ENCODE measurements at regions of chr6 and their contacts with region 1.

Region 1: DNA sequence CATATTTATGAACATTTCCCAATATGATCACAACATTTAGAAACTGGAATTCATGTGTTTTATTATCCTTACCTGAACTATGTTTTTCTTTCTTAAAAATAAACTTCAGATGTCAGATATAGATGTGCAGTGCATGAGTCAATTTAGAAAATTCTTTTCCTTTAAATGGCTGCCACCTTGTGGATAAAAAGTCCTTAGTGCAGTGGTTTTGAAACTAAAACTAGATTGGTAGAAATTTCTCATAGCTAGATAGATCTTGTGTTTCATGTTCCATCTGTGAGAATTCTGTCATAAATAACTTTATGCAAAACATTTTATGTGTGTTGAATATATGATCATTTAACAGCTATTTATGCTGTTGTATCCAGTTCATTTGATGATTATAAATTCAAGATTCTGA is 134.9 kb downstream of the KLHL32 start:
- DNase-seq: no peak
- H3K4me3 Mint-ChIP-seq: no peak overlapping the region
- H3K27ac Mint-ChIP-seq: no peak overlapping the region
- H3K4me1 Mint-ChIP-seq: peaks cover 2% of the 10 kb centered on the region
- H3K27me3 Mint-ChIP-seq: no peaks in the 10 kb centered on the region

Region 2: DNA sequence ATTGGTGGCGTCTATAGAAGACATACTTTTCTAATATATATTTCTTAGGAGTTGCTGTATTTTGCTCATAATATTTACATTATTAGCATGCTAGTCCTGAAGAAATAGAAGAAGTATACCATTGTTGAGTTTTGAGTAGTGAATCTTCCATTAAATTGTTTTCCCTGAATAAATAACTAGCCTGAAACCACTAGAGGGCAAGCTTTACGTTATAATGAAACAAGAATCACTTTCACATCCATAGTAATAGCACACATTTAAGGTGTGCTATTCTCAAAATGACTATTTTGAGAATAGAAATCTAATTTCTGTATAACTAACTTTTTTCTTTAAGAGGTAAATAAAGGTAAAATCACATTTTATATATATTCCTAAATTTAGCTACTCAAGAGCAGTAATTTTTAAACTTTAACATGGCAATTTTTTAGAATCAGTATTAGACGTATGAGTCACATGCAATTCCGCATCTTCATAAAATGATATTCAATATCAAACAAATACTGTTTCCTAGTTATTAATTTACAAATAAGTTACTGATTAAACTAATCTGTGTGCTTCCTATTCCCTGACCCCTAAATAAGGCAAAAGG is 1695.4 kb before region 1 on chr6:
- CTCF ChIA-PET with region 1: no interaction called
- intact Hi-C with region 1: loop called (anchors 10 kb)
- DNase-seq: no peak
- H3K4me3 Mint-ChIP-seq: no peak overlapping the region
- H3K27ac Mint-ChIP-seq: no peak overlapping the region
- H3K4me1 Mint-ChIP-seq: no peaks in the 10 kb centered on the region
- H3K27me3 Mint-ChIP-seq: no peaks in the 10 kb centered on the region

Region 3: GRCh38 chr6:96542702-96543101 is 516.8 kb before region 1 on chr6:
- CTCF ChIA-PET with region 1: no interaction called
- intact Hi-C with region 1: loop called (anchors 1 kb)
- DNase-seq: peak; percentile 6
- H3K4me3 Mint-ChIP-seq: no peak overlapping the region
- H3K27ac Mint-ChIP-seq: no peak overlapping the region
- H3K4me1 Mint-ChIP-seq: no peaks in the 10 kb centered on the region
- H3K27me3 Mint-ChIP-seq: no peaks in the 10 kb centered on the region

Region 4: DNA sequence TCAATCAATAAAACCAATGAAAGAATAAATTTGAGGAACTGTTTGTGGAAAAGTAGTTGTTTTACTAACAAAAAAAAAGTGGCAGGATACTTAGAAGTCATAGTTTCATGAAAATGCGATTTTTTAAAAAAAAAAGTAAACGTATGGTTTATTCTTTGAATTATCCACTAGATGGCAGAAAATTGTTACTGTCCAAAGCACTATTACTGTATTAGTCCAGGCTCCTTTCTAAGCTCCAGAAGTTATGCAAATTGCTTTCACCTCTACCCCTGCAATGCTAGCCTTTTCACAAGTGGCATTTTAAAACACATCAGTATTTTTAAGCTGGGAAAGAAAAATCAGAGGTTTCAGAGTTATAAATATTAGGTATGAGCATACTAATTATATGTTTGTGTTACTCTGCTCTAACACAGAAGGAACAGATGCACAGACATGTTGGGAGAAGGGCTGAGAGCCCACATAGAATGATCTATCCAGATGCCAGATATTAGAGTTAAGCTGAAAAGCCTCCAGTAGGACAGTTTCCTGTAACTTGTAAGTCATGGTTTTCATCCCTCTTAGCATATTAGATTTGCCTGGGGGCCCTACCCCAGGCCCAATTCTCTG is 432.6 kb before region 1 on chr6:
- CTCF ChIA-PET with region 1: interaction called, 14 read pairs
- intact Hi-C with region 1: loop called (anchors 1 kb)
- DNase-seq: no peak
- H3K4me3 Mint-ChIP-seq: no peak overlapping the region
- H3K27ac Mint-ChIP-seq: no peak overlapping the region
- H3K4me1 Mint-ChIP-seq: no peaks in the 10 kb centered on the region
- H3K27me3 Mint-ChIP-seq: peaks cover 4% of the 10 kb centered on the region

Region 5: GRCh38 chr6:96704713-96705112 is 354.8 kb before region 1 on chr6:
- CTCF ChIA-PET with region 1: no interaction called
- intact Hi-C with region 1: loop called (anchors 10 kb)
- DNase-seq: no peak
- H3K4me3 Mint-ChIP-seq: no peak overlapping the region
- H3K27ac Mint-ChIP-seq: no peak overlapping the region
- H3K4me1 Mint-ChIP-seq: no peaks in the 10 kb centered on the region
- H3K27me3 Mint-ChIP-seq: peaks cover 5% of the 10 kb centered on the region

Region 6: GRCh38 chr6:96837081-96837971 is 222.1 kb before region 1 on chr6 and contains the start of gene GPR63:
- CTCF ChIA-PET with region 1: interaction called, 5 read pairs
- intact Hi-C with region 1: loop called (anchors 2 kb)
- DNase-seq: peak; percentile 75
- H3K4me3 Mint-ChIP-seq: peak within 1 kb of the TSS; percentile 82
- H3K27ac Mint-ChIP-seq: no peak within 1 kb of the TSS
- H3K4me1 Mint-ChIP-seq: peaks cover 10% of the 10 kb centered on the region
- H3K27me3 Mint-ChIP-seq: peaks cover 54% of the 10 kb centered on the region
- total RNA-seq, gene GPR63: 0.72 to 0.81 TPM

Region 7: DNA sequence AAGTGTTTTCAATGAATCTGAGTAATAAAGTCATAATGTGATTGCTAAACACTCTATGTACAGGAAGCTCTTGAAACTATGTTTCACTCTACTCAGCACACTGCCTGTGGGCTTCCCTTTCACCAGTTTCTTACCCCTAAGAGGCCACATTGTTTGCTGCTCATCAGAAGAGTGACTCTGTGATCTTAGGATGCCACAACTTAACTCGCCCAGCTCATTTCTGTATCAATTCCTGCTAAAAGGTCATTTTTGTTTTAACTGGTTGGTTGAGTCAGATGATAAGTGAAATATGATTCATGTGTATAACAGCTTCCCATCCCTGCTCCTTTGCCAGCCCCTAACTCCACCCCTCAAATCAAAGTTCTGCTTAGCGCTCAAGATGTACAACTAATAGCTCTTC is 152.0 kb before region 1 on chr6:
- CTCF ChIA-PET with region 1: interaction called, 24 read pairs
- intact Hi-C with region 1: no loop called
- DNase-seq: peak; percentile 79
- H3K4me3 Mint-ChIP-seq: no peak overlapping the region
- H3K27ac Mint-ChIP-seq: peak overlapping the region; percentile 72
- H3K4me1 Mint-ChIP-seq: peaks cover 24% of the 10 kb centered on the region
- H3K27me3 Mint-ChIP-seq: peaks cover 22% of the 10 kb centered on the region